ENCODE measurements at regions of chrX and their contacts with region 1.

Region 1: GRCh38 chrX:66698273-66699204 is 59.7 kb upstream of the EDA2R start:
- DNase-seq: no peak
- H3K4me3 ChIP-seq: no peak overlapping the region
- H3K27ac ChIP-seq: no peak overlapping the region
- H3K27me3 ChIP-seq: peaks cover 0 to 67% (median 9%) of the 10 kb centered on the region in 45 donors
- CTCF ChIP-seq: no peak

Region 2: GRCh38 chrX:66399273-66399672 is 299.3 kb before region 1 on chrX:
- intact Hi-C with region 1: loop called in 1 of 2 experiments (anchors 5 kb)
- DNase-seq: no peak
- H3K4me3 ChIP-seq: no peak overlapping the region
- H3K27ac ChIP-seq: no peak overlapping the region
- H3K27me3 ChIP-seq: peaks cover 0 to 24% (median 0%) of the 10 kb centered on the region in 45 donors
- CTCF ChIP-seq: no peak

Region 3: DNA sequence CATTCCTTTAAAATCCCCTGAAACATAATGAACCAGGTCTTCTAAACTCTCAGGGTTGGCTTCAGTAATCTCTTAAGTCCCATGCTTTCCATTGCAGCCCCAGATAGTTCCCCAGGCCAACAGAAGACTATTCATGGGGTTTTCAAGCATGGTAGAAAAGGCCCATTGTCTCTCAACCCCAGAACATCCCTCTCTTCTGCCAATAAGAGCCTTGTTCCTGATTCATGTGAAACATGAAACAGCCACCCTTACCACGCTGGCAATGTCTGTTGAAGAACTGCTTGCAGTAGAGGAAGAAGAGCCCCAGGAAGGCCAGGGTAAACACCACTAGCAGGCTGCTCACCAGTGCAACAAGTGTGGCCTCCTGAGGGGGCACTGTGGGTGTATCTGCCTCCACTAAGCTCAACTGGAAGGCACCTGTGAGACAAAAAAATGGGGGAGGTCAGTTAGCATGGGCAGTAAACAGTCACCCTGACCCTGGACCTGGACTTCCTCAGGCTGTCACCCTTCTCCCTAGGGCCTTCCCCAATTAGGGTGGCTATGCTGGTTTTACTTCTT is 96.1 kb before region 1 on chrX:
- intact Hi-C with region 1: no loop called
- DNase-seq: peak in 3 of 10 donors; percentile 2 to 48 (median 45)
- H3K4me3 ChIP-seq: no peak overlapping the region
- H3K27ac ChIP-seq: peak overlapping the region in 48 of 59 donors; percentile 2 to 84 (median 53)
- H3K27me3 ChIP-seq: peaks cover 0 to 81% (median 18%) of the 10 kb centered on the region in 45 donors
- CTCF ChIP-seq: peak in 3 of 56 donors; percentile 7 to 11 (median 9)